Activated CD4-positive, alpha-beta T cell treated with anti-CD3 and anti-CD28 coated beads, Interleukin-2, amount 10 ng/mL, durations not matched to agents 24 days and 14 days (primary cell): ENCODE measurements at regions of chr2 and their contacts with region 1.

Region 1: GRCh38 chr2:219057709-219058540 is 2.8 kb downstream of the IHH start:
- DNase-seq: peak; percentile 94
- H3K4me3 Mint-ChIP-seq: peak overlapping the region; percentile 48
- H3K27ac Mint-ChIP-seq: no peak overlapping the region
- H3K4me1 Mint-ChIP-seq: peaks cover 10% of the 10 kb centered on the region
- H3K27me3 Mint-ChIP-seq: peaks cover 61% of the 10 kb centered on the region

Region 2: GRCh38 chr2:218962859-218963492 is 94.9 kb before region 1 on chr2:
- intact Hi-C with region 1: loop called (anchors 5 kb)
- DNase-seq: peak; percentile 90
- H3K4me3 Mint-ChIP-seq: no peak overlapping the region
- H3K27ac Mint-ChIP-seq: no peak overlapping the region
- H3K4me1 Mint-ChIP-seq: peaks cover 8% of the 10 kb centered on the region
- H3K27me3 Mint-ChIP-seq: peaks cover 62% of the 10 kb centered on the region

Region 3: DNA sequence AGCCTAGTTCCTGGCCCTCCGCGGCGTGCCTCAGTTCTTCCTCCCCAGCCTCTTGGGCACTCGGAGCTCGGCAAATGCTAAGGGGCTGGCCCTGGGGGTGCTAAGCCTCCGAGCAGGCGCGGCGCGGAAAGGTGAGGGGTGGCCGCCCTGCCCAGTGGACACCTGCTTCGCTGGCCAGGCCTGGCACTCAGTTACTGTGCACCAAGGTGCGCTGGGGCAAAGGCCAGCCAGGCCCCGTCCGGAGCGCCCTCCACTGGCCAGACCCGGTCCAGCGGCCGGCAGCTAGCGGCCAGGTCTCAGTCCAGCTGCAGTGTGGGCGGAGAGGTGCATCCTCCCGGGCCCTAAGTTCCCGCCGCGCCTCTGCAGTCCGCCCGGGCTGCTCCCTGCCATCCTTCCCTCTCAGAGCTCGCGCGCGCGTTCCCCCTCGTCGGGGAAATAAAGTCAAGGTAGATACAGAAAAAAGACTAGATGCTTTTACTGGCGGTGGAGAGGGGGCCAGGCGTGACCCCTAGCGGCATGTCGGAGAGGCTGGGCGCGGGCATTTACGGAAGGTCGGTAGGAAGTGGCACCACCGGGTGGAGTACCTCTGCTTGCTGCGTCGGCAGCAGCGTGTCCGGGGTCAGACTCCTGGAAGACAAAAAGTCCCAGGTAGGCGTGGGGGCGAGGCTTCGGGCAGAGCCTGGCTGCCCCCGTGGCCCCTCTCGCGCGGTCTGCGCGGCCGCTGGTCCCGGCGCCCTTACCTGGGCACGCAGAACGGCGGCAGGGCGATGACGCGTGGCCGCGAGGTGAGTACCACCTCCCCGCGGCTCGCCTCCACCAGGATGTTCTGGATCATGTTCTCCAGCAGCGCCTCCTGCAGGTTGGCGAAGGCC is 55.3 kb before region 1 on chr2:
- intact Hi-C with region 1: loop called (anchors 2 kb)
- DNase-seq: peak; percentile 81
- H3K4me3 Mint-ChIP-seq: peak overlapping the region; percentile 32
- H3K27ac Mint-ChIP-seq: no peak overlapping the region
- H3K4me1 Mint-ChIP-seq: peaks cover 2% of the 10 kb centered on the region
- H3K27me3 Mint-ChIP-seq: peaks cover 72% of the 10 kb centered on the region

Region 4: GRCh38 chr2:219119422-219120043 is 61.6 kb after region 1 on chr2:
- intact Hi-C with region 1: loop called (anchors 1 kb)
- DNase-seq: peak; percentile 86
- H3K4me3 Mint-ChIP-seq: no peak overlapping the region
- H3K27ac Mint-ChIP-seq: no peak overlapping the region
- H3K4me1 Mint-ChIP-seq: peaks cover 8% of the 10 kb centered on the region
- H3K27me3 Mint-ChIP-seq: no peaks in the 10 kb centered on the region

Region 5: DNA sequence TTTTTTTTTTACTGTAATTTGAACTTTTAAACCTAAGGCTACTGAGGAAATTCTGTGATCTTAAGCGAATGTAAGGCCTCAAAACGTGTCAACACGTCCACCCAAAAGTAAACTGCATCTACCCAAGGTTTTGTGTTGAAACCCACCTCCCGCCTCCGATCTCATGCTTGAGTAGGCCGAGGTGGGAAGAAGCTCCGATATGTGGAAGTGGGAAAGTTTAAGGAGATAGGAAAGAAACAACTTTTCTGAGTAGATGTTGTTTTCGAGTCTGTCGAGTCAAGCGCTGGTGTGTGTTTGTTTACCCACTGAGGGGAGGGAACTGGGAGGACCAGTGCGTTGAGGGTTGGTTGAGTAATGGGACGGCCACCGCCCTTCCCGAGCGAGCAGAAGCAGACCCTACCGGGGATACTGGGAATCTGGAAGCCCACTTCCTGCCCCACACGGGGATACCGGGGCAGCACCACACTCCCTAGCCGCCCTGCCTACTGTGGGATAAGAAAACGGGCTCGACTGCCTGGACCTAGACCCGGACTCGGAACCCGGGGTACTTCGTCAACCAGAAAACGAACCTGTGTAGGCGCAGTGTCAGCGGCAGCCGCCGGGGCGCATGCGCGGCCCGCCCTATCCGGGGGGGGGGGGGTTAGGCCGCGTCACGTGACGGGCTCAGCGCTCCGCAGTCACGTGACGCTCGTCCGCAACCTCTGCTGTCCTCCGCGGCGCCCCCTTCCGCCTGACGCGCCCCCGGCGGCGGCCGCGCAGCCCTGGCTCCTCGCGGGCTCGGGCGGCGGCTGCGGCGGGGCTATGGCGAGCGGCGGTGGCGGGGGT is 119.8 kb after region 1 on chr2 and contains the start of gene RETREG2:
- intact Hi-C with region 1: no loop called
- DNase-seq: peak; percentile 93
- H3K4me3 Mint-ChIP-seq: peak within 1 kb of the TSS; percentile 94
- H3K27ac Mint-ChIP-seq: peak within 1 kb of the TSS; percentile 99
- H3K4me1 Mint-ChIP-seq: peaks cover 62% of the 10 kb centered on the region
- H3K27me3 Mint-ChIP-seq: no peaks in the 10 kb centered on the region
- total RNA-seq, gene RETREG2: 54.1 and 57.4 TPM in 2 replicates

Region 6: DNA sequence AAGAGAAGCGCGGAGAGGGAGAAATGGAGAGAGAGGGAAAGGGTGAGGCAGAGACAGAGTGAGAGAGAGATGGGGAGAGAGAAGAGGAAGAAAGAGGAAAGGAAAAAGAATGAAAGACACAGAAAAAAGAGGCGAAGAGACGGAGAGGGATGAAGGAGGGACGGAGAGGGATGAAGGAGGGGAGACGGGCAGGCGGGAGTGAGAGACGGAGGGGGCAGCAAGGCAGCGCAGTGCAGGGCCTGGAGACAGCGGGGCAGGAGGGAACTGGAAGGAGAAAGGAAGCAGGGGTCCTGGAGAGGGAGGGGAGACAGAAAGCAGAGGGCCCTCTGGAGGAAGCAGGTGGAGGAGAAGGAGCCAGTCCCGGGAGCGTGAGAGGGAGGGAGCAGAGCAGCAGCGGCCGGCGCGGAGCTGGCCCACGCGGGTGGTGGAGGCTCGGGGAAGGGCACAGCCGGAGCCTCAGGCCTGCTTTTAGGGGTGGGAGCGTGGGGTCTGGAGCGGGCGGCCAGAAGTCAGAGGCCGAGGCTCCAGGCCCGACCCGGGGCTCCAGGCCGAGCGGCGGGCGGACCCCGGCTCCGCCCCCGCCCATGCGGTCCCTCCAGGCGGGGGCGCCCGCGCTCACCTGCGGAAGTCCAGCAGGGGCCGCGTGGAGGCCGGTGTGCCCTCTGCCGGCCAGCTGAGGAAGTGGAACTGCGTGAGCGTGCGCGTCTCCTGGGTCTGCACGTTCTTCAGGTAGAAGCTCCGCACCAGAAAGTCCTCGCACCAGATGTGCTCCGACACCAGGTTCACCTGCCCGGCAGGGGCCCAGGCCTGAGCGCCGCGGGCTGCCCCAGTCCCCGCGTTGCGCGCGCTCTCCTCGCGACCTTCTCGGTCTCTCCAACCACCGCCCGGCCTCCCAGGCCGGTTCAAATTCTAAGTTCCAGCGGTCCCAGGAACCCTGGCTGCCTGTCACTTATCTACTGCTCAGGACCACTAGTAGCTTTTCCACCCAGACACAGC is 236.7 kb after region 1 on chr2:
- intact Hi-C with region 1: loop called (anchors 2 kb)
- DNase-seq: peak; percentile 97
- H3K4me3 Mint-ChIP-seq: peak overlapping the region; percentile 84
- H3K27ac Mint-ChIP-seq: peak overlapping the region; percentile 97
- H3K4me1 Mint-ChIP-seq: peaks cover 17% of the 10 kb centered on the region
- H3K27me3 Mint-ChIP-seq: peaks cover 6% of the 10 kb centered on the region